ENCODE measurements at regions of chr5 and their contacts with region 1.

Region 1: GRCh38 chr5:129541644-129542251 is 81.7 kb downstream of the ADAMTS19 start:
- DNase-seq: no peak
- H3K4me3 ChIP-seq: no peak overlapping the region
- H3K27ac ChIP-seq: no peak overlapping the region
- H3K4me1 ChIP-seq: no peaks in the 10 kb centered on the region
- H3K27me3 ChIP-seq: no peaks in the 10 kb centered on the region
- CTCF ChIP-seq: peak in 2 of 5 experiments; percentile 12 to 24
- EP300 ChIP-seq: no peak
- POLR2A ChIP-seq: no peak

Region 2: DNA sequence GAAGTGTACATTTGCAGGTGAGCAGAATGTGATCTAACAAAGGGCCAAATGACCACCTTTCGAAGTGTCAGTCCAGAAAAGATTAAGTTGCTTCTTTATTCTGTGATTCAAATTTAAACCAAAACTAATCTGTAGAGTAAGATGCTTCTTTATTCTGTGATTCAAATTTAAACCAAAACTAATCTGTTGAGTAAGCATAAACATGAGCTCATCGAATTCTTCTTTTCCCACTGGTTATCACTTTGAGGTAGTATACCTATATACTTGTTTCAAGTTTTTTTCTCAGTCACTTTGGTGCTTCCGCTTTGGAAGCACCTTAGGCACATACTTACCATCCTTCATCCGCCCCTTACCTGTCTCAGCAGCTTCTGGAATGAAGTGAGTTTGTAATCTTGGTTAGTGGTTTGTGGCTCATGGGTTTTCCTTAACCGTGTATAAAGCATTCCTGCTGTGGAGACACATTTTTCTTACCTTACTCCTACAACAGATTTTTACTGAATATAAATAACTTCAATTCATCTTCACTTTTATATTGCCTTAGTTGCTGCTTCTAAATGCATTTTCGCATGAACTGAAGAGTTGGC is 1933.6 kb before region 1 on chr5:
- in situ Hi-C with region 1: no loop called
- intact Hi-C with region 1: loop called (anchors 5 kb)
- DNase-seq: no peak
- H3K4me3 ChIP-seq: no peak overlapping the region
- H3K27ac ChIP-seq: no peak overlapping the region
- H3K4me1 ChIP-seq: peaks cover 0 to 4% (median 0%) of the 10 kb centered on the region in 4 donors
- H3K27me3 ChIP-seq: no peaks in the 10 kb centered on the region
- CTCF ChIP-seq: no peak
- EP300 ChIP-seq: no peak
- POLR2A ChIP-seq: no peak

Measured in transverse colon (tissue), 4 donors.